OCI-LY7 (cell line): ENCODE measurements at regions of chrX and their contacts with region 1.

Region 1: DNA sequence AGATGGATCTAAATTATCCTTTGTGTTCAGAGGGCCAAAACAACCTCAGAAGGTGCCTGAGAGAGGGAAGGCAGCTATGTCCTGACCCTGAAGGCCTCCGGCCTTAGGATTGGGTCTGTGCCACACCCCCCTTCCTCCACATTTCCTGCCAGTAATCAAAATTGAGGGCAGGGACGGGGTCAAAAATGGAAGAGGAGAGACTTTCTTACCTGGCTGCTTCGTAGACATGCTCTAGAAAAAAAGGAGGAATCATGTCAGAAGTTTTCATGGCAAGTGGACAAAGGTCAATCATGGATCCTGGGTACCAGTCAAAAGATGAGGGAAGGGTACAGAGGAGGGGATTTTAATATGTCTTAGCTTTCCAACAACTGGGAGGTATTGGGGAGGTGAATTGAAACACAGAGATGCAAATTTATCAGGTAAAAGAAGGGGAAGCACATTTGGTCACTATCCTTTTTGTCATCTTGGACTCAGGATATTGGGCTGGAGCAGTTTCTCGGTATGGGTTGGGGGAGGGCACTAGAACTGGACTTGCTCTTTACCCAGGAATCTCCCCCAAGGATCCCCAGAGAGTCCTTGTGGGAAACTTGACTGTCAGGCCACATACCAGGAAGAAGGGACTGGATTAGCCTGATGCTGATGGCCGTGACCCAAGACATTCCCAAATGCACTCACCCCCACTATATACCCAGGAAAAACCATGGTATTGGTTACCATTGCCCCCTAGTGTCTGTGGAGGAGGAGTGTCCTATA is 17.1 kb downstream of the VSIG4 start:
- DNase-seq: no peak
- H3K4me3 ChIP-seq: no peak overlapping the region
- H3K27ac ChIP-seq: no peak overlapping the region
- H3K4me1 ChIP-seq: no peaks in the 10 kb centered on the region
- CTCF ChIP-seq: peak; percentile 71

Region 2: GRCh38 chrX:65932176-65933084 is 90.4 kb before region 1 on chrX:
- CTCF ChIA-PET with region 1: no interaction called
- POLR2A ChIA-PET with region 1: no interaction called
- intact Hi-C with region 1: loop called (anchors 10 kb)
- DNase-seq: peak; percentile 33
- H3K4me3 ChIP-seq: no peak overlapping the region
- H3K27ac ChIP-seq: no peak overlapping the region
- H3K4me1 ChIP-seq: no peaks in the 10 kb centered on the region
- CTCF ChIP-seq: peak; percentile 46